T-cell (primary cell): ENCODE measurements at regions of chr3 and their contacts with region 1.

Region 1: DNA sequence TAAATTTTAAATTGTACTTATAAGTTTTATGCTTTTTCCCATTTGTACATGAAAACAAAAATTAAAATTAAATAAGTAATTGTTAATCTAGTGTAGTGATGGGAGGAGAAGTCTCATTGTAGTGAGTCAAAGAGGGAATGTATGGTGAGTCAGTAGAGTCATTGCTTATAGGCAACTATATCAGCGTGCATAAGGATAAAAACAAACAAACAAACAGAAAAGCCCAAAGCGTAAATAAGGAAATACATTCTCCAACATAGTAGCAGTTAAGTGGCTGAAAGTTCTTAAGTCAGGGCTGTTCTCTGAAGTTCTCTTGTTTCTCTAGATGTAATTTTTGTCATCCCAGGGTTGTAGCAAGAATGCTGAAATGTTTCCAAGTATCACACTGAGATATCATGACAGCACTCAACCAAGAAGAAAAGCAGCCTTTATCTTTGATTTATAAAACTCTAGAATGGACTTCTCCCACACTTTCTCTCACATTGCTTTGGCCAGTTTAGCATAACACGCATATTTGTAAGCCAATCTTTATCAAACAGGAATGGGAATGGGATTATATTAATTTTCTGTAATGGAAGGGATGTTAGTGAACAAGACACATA is 184.1 kb upstream of the TP63 start:
- DNase-seq: no peak
- ATAC-seq: no peak
- H3K4me3 ChIP-seq: no peak overlapping the region
- H3K4me3 Mint-ChIP-seq: no peak overlapping the region
- H3K27ac ChIP-seq: no peak overlapping the region
- H3K27ac Mint-ChIP-seq: no peak overlapping the region
- H3K4me1 ChIP-seq: no peaks in the 10 kb centered on the region
- H3K4me1 Mint-ChIP-seq: no peaks in the 10 kb centered on the region
- H3K27me3 ChIP-seq: no peaks in the 10 kb centered on the region
- H3K27me3 Mint-ChIP-seq: no peaks in the 10 kb centered on the region

Region 2: DNA sequence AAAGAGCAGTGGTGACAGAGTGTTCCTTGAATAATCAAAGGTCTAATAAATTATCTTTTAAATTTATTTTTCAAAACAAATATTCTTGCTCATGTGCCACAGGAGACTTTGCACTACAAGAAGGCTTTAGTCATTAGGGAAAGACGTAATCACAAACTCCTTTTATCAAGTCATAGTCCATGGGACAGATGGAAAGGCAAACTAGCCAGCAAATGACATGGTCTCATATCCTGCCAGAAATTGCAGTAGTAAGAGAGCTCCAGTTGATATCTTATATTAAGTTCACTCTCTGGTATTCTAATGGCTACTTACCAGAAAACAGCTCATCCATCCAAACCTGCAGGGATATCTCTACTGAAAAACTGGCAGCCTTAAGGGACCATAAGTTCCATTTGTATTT is 40.9 kb before region 1 on chr3:
- CTCF ChIA-PET with region 1: interaction called in 1 of 2 experiments, 16 read pairs
- POLR2A ChIA-PET with region 1: no interaction called
- DNase-seq: no peak
- ATAC-seq: no peak
- H3K4me3 ChIP-seq: no peak overlapping the region
- H3K4me3 Mint-ChIP-seq: no peak overlapping the region
- H3K27ac ChIP-seq: no peak overlapping the region
- H3K27ac Mint-ChIP-seq: no peak overlapping the region
- H3K4me1 ChIP-seq: peaks cover 0 to 2% of the 10 kb centered on the region in 2 experiments
- H3K4me1 Mint-ChIP-seq: peaks cover 0 to 2% (median 0%) of the 10 kb centered on the region in 3 donors
- H3K27me3 ChIP-seq: no peaks in the 10 kb centered on the region
- H3K27me3 Mint-ChIP-seq: no peaks in the 10 kb centered on the region